Gastrocnemius medialis (tissue), 4 donors: ENCODE measurements at regions of chr12 and their contacts with region 1.

Region 1: GRCh38 chr12:112108201-112109079 is at the start of gene NAA25:
- DNase-seq: peak; percentile 86 to 92
- ATAC-seq: peak; percentile 92 to 93
- H3K4me3 ChIP-seq: peak within 1 kb of the TSS; percentile 68 to 99 (median 94)
- H3K27ac ChIP-seq: peak within 1 kb of the TSS; percentile 93 to 100 (median 96)
- H3K4me1 ChIP-seq: peaks cover 42 to 45% of the 10 kb centered on the region in 2 donors
- H3K27me3 ChIP-seq: no peaks in the 10 kb centered on the region
- CTCF ChIP-seq: peak in 1 of 5 experiments; percentile 11
- POLR2A ChIP-seq: peak; percentile 56 to 73
- total RNA-seq, gene NAA25: 17.2 to 44.6 (median 25.5) TPM

Region 2: GRCh38 chr12:111942557-111942956 is 165.9 kb before region 1 on chr12:
- in situ Hi-C with region 1: no loop called
- intact Hi-C with region 1: loop called (anchors 10 kb)
- DNase-seq: no peak
- ATAC-seq: no peak
- H3K4me3 ChIP-seq: no peak overlapping the region
- H3K27ac ChIP-seq: no peak overlapping the region
- H3K4me1 ChIP-seq: peaks cover 9 to 13% of the 10 kb centered on the region in 2 donors
- H3K27me3 ChIP-seq: no peaks in the 10 kb centered on the region
- CTCF ChIP-seq: no peak
- POLR2A ChIP-seq: no peak

Region 3: GRCh38 chr12:112012775-112013600 is 95.5 kb before region 1 on chr12 and contains the starts of genes ERP29 and TMEM116:
- in situ Hi-C with region 1: no loop called
- intact Hi-C with region 1: loop called (anchors 1 kb)
- DNase-seq: peak; percentile 99 to 100
- ATAC-seq: peak; percentile 87 to 88
- H3K4me3 ChIP-seq: peak within 1 kb of the TSS; percentile 89 to 98 (median 96)
- H3K27ac ChIP-seq: peak within 1 kb of the TSS; percentile 93 to 98 (median 97)
- H3K4me1 ChIP-seq: peaks cover 24 to 31% of the 10 kb centered on the region in 2 donors
- H3K27me3 ChIP-seq: no peaks in the 10 kb centered on the region
- CTCF ChIP-seq: peak; percentile 72 to 81 (median 78)
- POLR2A ChIP-seq: peak; percentile 96 to 97
- total RNA-seq, gene ERP29: 9.9 to 20.9 (median 16.8) TPM
- total RNA-seq, gene TMEM116: 1.9 to 8.5 (median 4.3) TPM

Region 4: DNA sequence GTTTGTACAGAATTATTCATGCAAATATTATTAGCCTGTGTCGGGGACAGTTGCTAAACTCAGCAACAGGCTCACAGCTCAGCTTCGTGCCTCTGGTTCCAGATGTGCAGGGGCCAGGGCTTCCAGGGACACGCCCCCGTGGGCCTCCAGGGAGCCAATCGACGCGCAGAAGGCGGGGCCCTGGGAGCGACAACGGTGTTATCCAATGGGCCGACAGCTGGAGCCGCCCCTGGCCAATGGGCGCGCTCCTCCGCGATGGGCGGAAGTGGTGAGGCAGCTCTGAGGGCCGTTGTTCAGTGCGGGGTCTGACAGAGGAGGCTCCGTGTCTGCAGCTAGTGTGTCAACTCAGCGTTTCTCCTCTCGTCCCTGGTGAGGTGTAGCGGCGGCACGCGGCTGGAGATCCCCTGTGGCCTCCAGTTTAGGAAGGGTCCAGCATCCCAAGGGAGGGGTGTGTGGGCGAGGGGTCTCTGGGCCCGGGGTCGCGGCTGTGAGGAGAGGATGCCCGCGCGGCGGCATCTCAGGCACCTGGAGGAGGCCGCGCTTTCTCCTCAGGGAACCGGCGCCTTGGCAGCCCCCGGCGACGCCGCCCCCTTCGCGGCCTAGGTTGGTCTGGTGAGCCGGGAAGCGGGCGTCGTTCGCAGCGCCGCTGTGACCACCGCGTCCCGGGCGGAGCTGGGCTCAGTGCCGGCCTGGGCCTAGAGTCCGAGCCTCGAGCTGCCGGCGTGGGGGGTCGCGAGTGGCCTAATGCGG is 17.0 kb after region 1 on chr12 and contains the start of gene TRAFD1:
- in situ Hi-C with region 1: no loop called
- intact Hi-C with region 1: loop called (anchors 2 kb)
- DNase-seq: peak; percentile 96 to 97
- ATAC-seq: peak; percentile 96 to 98
- H3K4me3 ChIP-seq: peak within 1 kb of the TSS; percentile 80 to 96 (median 92)
- H3K27ac ChIP-seq: peak within 1 kb of the TSS; percentile 86 to 97 (median 88)
- H3K4me1 ChIP-seq: peaks cover 19 to 33% of the 10 kb centered on the region in 2 donors
- H3K27me3 ChIP-seq: no peaks in the 10 kb centered on the region
- CTCF ChIP-seq: no peak
- POLR2A ChIP-seq: peak; percentile 92 to 95
- total RNA-seq, gene TRAFD1: 8.9 to 17.7 (median 14.5) TPM

Region 5: GRCh38 chr12:112418608-112419298 is 310.3 kb after region 1 on chr12 and contains the start of gene PTPN11:
- in situ Hi-C with region 1: loop called in 1 of 4 experiments (anchors 25 kb)
- intact Hi-C with region 1: no loop called
- DNase-seq: peak; percentile 72 to 82
- ATAC-seq: peak; percentile 67 to 69
- H3K4me3 ChIP-seq: peak within 1 kb of the TSS; percentile 70 to 94 (median 76)
- H3K27ac ChIP-seq: peak within 1 kb of the TSS; percentile 93 to 99 (median 97)
- H3K4me1 ChIP-seq: peaks cover 51 to 52% of the 10 kb centered on the region in 2 donors
- H3K27me3 ChIP-seq: no peaks in the 10 kb centered on the region
- CTCF ChIP-seq: peak; percentile 24 to 72 (median 57)
- POLR2A ChIP-seq: peak; percentile 91 to 94
- total RNA-seq, gene PTPN11: 112 to 235 (median 163) TPM